ENCODE measurements at regions of chr5 and their contacts with region 1.

Region 1: GRCh38 chr5:179795863-179796833 is 2.4 kb downstream of the LTC4S start:
- DNase-seq: peak; percentile 78 to 92 (median 85)
- ATAC-seq: peak; percentile 43 to 75 (median 66)
- H3K4me3 ChIP-seq: peak overlapping the region; percentile 46 to 82 (median 68)
- H3K27ac ChIP-seq: peak overlapping the region; percentile 63 to 95 (median 85)
- H3K4me1 ChIP-seq: peaks cover 5 to 58% (median 49%) of the 10 kb centered on the region in 12 donors
- H3K27me3 ChIP-seq: no peaks in the 10 kb centered on the region
- CTCF ChIP-seq: peak; percentile 63 to 96 (median 88)
- POLR2A ChIP-seq: peak in 1 of 2 donors; percentile 61

Region 2: GRCh38 chr5:179763215-179763945 is 32.8 kb before region 1 on chr5:
- intact Hi-C with region 1: loop called (anchors 1 to 5 kb)
- DNase-seq: peak in 3 of 5 donors; percentile 67 to 73 (median 69)
- ATAC-seq: peak in 3 of 4 donors; percentile 47 to 79 (median 66)
- H3K4me3 ChIP-seq: no peak overlapping the region
- H3K27ac ChIP-seq: peak overlapping the region in 3 of 12 donors; percentile 35 to 51 (median 35)
- H3K4me1 ChIP-seq: peaks cover 0 to 96% (median 68%) of the 10 kb centered on the region in 12 donors
- H3K27me3 ChIP-seq: no peaks in the 10 kb centered on the region
- CTCF ChIP-seq: peak; percentile 79 to 96 (median 89)
- POLR2A ChIP-seq: no peak